ENCODE measurements at regions of chr1 and their contacts with region 1.

Region 1: GRCh38 chr1:152127670-152128069 is 12.4 kb upstream of the TCHH start:
- DNase-seq: no peak

Region 2: DNA sequence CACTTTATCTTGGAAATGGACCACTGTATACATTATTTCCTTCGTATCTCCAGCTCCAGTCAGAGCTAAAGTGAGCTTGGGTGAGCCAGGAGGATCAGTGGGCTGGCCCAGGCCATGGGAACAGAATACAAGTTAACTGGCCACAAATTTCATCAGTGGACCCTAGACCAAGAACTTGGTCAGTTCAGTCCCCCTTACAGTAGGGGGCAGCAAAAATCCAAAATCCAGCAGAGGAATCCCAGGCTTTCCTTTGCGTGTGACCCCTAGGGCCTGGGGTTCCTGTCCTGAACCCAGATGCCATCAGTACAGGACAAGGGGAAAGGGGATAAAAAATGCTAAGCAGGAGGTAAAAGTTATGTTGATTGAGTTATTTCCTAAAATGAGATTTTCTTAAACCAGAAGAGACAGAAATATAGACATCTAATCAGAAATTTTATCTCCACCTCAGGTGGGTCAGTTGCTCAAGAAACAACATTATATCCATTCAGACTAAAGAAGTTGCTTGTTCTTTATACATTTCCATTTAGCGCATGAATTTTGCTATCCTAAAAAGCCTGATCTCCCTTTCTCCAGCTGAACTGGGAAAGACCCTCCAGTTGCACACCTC is 358.8 kb after region 1 on chr1:
- intact Hi-C with region 1: loop called in 1 of 2 experiments (anchors 5 kb)
- DNase-seq: no peak

Measured in posterior vena cava (tissue), 2 donors.